ENCODE measurements at regions of chr1 and their contacts with region 1.

Region 1: GRCh38 chr1:117284399-117285215 is 73.9 kb upstream of the VTCN1 start:
- DNase-seq: peak; percentile 80
- H3K4me3 ChIP-seq: no peak overlapping the region
- H3K27ac ChIP-seq: no peak overlapping the region
- H3K4me1 ChIP-seq: no peaks in the 10 kb centered on the region
- H3K27me3 ChIP-seq: no peaks in the 10 kb centered on the region
- CTCF ChIP-seq: peak; percentile 67

Region 2: GRCh38 chr1:116737020-116737854 is 547.4 kb before region 1 on chr1:
- CTCF ChIA-PET with region 1: interaction called, 3 read pairs
- POLR2A ChIA-PET with region 1: no interaction called
- intact Hi-C with region 1: loop called (anchors 10 kb)
- DNase-seq: peak; percentile 62
- H3K4me3 ChIP-seq: no peak overlapping the region
- H3K27ac ChIP-seq: no peak overlapping the region
- H3K4me1 ChIP-seq: peaks cover 2% of the 10 kb centered on the region
- H3K27me3 ChIP-seq: no peaks in the 10 kb centered on the region
- CTCF ChIP-seq: peak; percentile 86

Region 3: GRCh38 chr1:117121776-117122697 is 162.6 kb before region 1 on chr1:
- CTCF ChIA-PET with region 1: interaction called, 5 read pairs
- POLR2A ChIA-PET with region 1: no interaction called
- intact Hi-C with region 1: loop called (anchors 1 kb)
- DNase-seq: peak; percentile 96
- H3K4me3 ChIP-seq: peak overlapping the region; percentile 59
- H3K27ac ChIP-seq: peak overlapping the region; percentile 82
- H3K4me1 ChIP-seq: no peaks in the 10 kb centered on the region
- H3K27me3 ChIP-seq: peaks cover 8% of the 10 kb centered on the region
- CTCF ChIP-seq: peak; percentile 92

Region 4: GRCh38 chr1:117128323-117129079 is 156.1 kb before region 1 on chr1:
- CTCF ChIA-PET with region 1: interaction called, 18 read pairs
- POLR2A ChIA-PET with region 1: no interaction called
- intact Hi-C with region 1: no loop called
- DNase-seq: peak; percentile 61
- H3K4me3 ChIP-seq: no peak overlapping the region
- H3K27ac ChIP-seq: no peak overlapping the region
- H3K4me1 ChIP-seq: no peaks in the 10 kb centered on the region
- H3K27me3 ChIP-seq: peaks cover 8% of the 10 kb centered on the region
- CTCF ChIP-seq: peak; percentile 68

Region 5: DNA sequence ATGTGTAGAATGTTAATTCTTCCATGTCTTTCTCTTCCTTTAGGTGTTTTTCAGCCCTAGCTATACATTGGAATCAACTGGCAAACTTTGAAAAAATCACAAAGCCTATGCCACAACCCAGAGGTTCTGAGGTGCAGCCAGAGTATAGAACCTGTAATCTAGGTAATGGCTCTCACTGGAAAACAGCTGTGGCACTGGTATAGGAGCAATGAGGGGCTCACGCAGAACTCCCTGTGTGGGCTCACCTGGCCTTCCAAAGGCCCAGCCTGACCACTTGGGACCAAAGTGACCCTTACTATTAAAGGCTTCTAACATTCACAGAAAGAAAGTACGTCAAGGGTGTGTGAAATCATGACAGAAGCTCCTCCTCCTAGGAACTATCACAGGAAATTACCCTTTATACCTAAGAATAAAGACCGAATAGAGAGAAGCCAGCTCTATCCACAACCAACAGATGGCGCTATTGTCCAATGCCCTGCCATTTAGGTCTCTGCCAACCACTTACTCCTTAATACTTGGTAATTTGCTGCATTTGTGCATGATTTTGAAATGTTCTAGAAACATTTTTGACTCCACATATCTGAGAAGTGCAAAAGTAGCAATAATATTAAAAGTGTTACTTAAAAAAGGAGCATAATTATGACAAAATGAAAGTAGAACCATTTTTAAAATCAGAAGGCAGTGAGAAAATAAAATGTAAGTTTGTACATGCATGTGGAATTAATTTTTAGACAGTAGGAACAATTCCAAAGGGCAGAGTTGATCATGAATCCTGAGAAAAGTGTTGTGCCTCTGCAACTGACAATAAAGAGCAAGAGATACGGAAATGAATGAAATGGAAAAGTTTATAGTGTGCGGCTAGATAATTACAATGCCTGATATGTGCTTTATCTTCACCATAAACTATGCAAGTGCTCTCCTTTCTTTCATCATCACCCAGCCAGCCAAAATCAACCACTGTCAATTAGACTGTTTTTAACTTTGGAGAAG is 1990.8 kb after region 1 on chr1:
- CTCF ChIA-PET with region 1: no interaction called
- POLR2A ChIA-PET with region 1: no interaction called
- intact Hi-C with region 1: no loop called
- DNase-seq: peak; percentile 69
- H3K4me3 ChIP-seq: no peak overlapping the region
- H3K27ac ChIP-seq: no peak overlapping the region
- H3K4me1 ChIP-seq: peaks cover 11% of the 10 kb centered on the region
- H3K27me3 ChIP-seq: no peaks in the 10 kb centered on the region
- CTCF ChIP-seq: peak; percentile 96

Measured in A673 (cell line).